HepG2 (cell line): ENCODE measurements at regions of chr3 and their contacts with region 1.

Region 1: DNA sequence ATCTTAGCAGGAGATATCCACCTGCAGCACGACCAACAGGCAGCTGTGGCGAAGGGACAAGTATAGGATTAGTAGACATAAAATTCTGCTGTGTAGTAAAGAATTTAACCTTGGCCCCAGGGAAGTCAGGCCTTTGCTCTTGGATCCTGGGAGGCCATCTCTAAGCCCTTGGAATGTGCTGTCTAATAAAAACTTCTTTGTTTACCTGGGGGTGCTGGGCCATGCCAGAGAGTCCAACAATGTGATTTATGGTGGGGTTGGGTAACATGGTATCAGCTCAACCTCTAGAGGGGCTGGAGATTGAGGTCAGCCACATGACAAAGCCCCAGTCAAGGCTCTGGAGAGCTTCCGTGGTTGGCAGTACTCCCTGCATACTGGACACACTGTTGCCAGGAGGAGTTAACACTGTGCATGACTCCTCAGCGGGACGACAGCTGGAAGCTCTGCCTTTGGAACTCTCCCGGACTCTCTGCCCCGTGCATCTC is 52.4 kb downstream of the HEG1 start:
- DNase-seq: peak; percentile 98
- ATAC-seq: peak; percentile 85
- H3K4me3 ChIP-seq: peak overlapping the region in 1 of 3 experiments; percentile 40; a peak in 1 of 6 replicates
- H3K27ac ChIP-seq: peak overlapping the region; percentile 100
- H3K4me1 ChIP-seq: peaks cover 80% of the 10 kb centered on the region
- H3K27me3 ChIP-seq: no peaks in the 10 kb centered on the region
- CTCF ChIP-seq: 0 out of 2 replicates have a peak, but pooled peaks have one; percentile 22
- EP300 ChIP-seq: peak; percentile 97 to 98
- POLR2A ChIP-seq: peak in 1 of 2 experiments; percentile 85; a peak in 2 of 4 replicates
- RAD21 ChIP-seq: peak; percentile 40; the same call in 1 of the 2 replicates

Region 2: DNA sequence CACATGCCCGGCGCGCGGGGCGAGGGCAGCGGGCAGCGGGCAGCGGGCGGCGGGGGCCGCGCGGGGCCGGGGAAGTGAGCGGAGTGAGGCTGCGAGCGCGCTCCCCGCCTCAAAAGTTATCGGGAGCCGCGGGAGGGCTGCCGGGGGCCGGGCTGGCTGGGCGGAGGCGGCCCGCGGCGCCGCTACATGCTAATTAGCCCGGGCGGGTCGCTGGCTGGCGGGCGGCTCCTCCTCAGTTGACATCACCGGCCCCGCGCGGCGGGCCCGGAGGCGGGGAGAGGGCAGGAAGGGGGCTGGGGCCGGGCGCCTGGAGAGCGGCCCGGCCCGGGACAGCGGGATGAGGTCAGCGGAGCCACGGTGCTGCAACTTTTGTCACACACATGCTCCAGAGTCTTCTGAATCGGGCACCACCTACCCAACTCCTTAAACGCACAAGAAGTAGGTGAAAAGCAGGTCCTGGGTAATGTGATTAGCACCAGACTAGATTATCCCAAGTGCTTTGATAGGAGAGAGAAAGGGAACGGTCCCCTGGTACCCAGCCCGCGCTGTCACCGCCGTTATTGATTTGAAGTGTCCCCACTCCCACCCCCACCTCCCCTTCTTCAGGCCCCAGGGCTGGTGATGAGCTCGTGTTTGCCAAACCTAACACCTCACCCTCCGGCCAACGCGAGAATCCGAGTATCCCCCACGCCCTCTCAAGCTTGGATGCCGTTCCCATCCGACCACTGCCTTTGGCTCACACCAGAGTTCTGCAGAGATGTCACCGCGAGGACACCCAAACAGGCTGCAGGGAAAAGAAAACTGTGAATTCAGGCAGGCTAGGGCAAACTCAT is 52.7 kb after region 1 on chr3 and contains the start of gene HEG1:
- CTCF ChIA-PET with region 1: no interaction called
- POLR2A ChIA-PET with region 1: interaction called, 25 read pairs
- in situ Hi-C with region 1: loop called (anchors 5 kb)
- intact Hi-C with region 1: loop called (anchors 1 kb)
- DNase-seq: peak; percentile 55
- ATAC-seq: peak; percentile 74
- H3K4me3 ChIP-seq: peak within 1 kb of the TSS; percentile 79 to 92 (median 82)
- H3K27ac ChIP-seq: peak within 1 kb of the TSS; percentile 69
- H3K4me1 ChIP-seq: peaks cover 69% of the 10 kb centered on the region
- H3K27me3 ChIP-seq: peaks cover 0 to 30% of the 10 kb centered on the region in 2 experiments; a peak in 4 of 5 replicates
- CTCF ChIP-seq: no peak
- EP300 ChIP-seq: no peak
- POLR2A ChIP-seq: peak in 1 of 2 experiments; percentile 61; a peak in 2 of 4 replicates
- RAD21 ChIP-seq: no peak
- total RNA-seq, gene HEG1: 9.7 and 10.7 TPM in 2 replicates

Region 3: GRCh38 chr3:125062888-125063618 is 59.6 kb after region 1 on chr3:
- CTCF ChIA-PET with region 1: no interaction called
- POLR2A ChIA-PET with region 1: interaction called, 55 read pairs
- in situ Hi-C with region 1: no loop called
- intact Hi-C with region 1: loop called (anchors 1 kb)
- DNase-seq: peak; percentile 99
- ATAC-seq: peak; percentile 92
- H3K4me3 ChIP-seq: peak overlapping the region in 1 of 3 experiments; percentile 27; a peak in 2 of 6 replicates
- H3K27ac ChIP-seq: peak overlapping the region; percentile 67
- H3K4me1 ChIP-seq: peaks cover 61% of the 10 kb centered on the region
- H3K27me3 ChIP-seq: peaks cover 0 to 15% of the 10 kb centered on the region in 2 experiments; a peak in 3 of 5 replicates
- CTCF ChIP-seq: no peak
- EP300 ChIP-seq: peak; percentile 87 to 91; a peak in 2 of 4 replicates
- POLR2A ChIP-seq: peak in 1 of 2 experiments; percentile 66; a peak in 2 of 4 replicates
- RAD21 ChIP-seq: no peak